ENCODE measurements at regions of chr19 and their contacts with region 1.

Region 1: GRCh38 chr19:37655689-37656371 is 565 bp upstream of the ZFP30 start:
- DNase-seq: peak; percentile 94
- H3K4me3 ChIP-seq: peak overlapping the region; percentile 71 to 88 (median 74)
- H3K27ac ChIP-seq: peak overlapping the region; percentile 88 to 94 (median 89)
- H3K4me1 ChIP-seq: peaks cover 12 to 30% (median 27%) of the 10 kb centered on the region in 4 donors
- H3K27me3 ChIP-seq: no peaks in the 10 kb centered on the region
- CTCF ChIP-seq: no peak
- EP300 ChIP-seq: no peak
- POLR2A ChIP-seq: no peak

Region 2: DNA sequence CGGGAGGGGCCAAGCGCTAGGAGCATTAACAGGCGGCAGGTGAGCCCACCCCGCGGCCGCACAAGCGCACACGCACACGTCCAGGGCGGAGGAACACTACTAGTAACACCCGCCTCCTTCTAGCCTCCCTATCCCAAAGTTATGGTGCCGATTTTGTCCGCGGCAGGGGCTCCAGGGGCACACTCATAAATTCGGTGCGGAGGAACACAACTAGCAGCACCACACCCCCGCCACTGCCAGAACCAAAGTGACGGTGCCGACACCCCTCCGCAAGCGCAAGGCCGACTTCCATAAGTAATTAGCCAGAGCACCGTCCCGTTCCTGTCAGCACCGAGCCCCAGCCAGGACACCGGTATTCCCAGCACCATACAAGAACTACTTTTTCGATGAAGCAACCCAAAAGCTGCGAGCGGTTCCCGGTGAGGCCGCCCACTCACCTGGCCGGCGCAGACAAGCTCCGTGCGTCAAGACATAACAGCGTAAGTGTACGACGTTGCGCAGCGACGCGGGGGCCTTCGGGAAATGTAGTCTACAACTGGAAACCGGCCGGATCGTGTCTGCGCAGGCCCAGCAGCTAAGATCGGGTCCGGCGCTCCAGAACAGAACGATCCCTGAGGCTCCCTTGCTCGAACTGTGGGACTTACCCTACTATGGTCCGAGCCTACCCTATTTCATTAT is 61.4 kb before region 1 on chr19 and contains the starts of genes ZNF540 and ZNF571:
- intact Hi-C with region 1: loop called (anchors 5 kb)
- DNase-seq: peak; percentile 99
- H3K4me3 ChIP-seq: peak within 1 kb of the TSS; percentile 70 to 83 (median 73)
- H3K27ac ChIP-seq: peak within 1 kb of the TSS; percentile 90 to 93 (median 92)
- H3K4me1 ChIP-seq: peaks cover 12 to 26% (median 23%) of the 10 kb centered on the region in 4 donors
- H3K27me3 ChIP-seq: no peaks in the 10 kb centered on the region
- CTCF ChIP-seq: peak in 1 of 3 experiments; percentile 10
- EP300 ChIP-seq: no peak
- POLR2A ChIP-seq: no peak
- total RNA-seq, gene ZNF540: 1.6 to 5.4 (median 2.5) TPM
- total RNA-seq, gene ZNF571: 2.8 to 4.7 (median 4.3) TPM

Region 3: GRCh38 chr19:37691881-37692504 is 36.2 kb after region 1 on chr19:
- intact Hi-C with region 1: loop called (anchors 5 kb)
- DNase-seq: peak; percentile 96
- H3K4me3 ChIP-seq: peak overlapping the region; percentile 57 to 82 (median 72)
- H3K27ac ChIP-seq: peak overlapping the region; percentile 84 to 86 (median 85)
- H3K4me1 ChIP-seq: peaks cover 10 to 21% (median 17%) of the 10 kb centered on the region in 4 donors
- H3K27me3 ChIP-seq: no peaks in the 10 kb centered on the region
- CTCF ChIP-seq: peak in 1 of 3 experiments; percentile 23
- EP300 ChIP-seq: no peak
- POLR2A ChIP-seq: peak; percentile 15

Region 4: GRCh38 chr19:37763488-37763887 is 107.7 kb after region 1 on chr19:
- intact Hi-C with region 1: no loop called
- DNase-seq: no peak
- H3K4me3 ChIP-seq: no peak overlapping the region
- H3K27ac ChIP-seq: no peak overlapping the region
- H3K4me1 ChIP-seq: no peaks in the 10 kb centered on the region
- H3K27me3 ChIP-seq: no peaks in the 10 kb centered on the region
- CTCF ChIP-seq: no peak
- EP300 ChIP-seq: no peak
- POLR2A ChIP-seq: no peak

Measured in esophagus muscularis mucosa (tissue), 4 donors.